Heart left ventricle (tissue), 16 donors: ENCODE measurements at regions of chr11 and their contacts with region 1.

Region 1: DNA sequence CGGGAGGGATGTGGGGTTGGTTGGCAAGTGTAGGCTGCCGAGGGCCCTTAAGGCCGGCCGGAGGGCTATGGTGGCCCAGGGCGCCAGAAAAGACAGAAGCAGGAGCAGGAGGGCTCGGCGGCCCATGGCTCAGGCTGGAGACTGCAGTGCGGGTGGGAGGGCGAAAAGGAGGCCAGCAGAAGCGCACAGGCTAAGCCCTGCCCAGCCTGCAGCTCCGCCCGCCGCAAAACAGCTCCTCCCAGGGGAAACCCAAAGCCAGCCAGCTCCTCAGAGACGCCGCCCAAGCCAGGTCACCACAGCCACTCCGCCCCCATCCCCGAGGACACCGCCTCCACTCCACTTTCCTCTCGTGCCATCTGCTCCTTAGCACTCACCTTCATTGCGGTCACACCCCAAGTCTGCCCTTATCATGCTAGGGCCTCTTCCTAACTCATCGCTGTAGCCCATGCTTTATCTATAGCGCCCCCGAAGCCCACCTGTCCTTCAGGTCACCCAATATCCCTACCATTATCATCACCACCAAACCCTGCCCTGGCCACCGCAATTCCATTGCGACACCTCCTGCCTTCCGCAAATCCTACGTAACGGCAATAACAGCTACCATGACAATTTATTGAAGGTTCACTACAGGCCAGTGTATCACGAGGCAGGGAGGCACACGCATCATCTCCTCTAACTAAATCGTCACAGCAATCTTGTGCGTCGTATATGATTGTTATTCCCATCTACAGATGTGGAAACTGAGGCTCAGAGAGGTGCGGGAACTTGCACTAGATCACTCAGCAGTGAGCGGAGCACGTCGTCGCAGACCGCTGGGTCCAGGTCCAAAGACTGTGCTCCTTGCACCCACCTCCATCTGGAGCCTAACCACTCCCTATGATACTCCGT is at the start of gene PRCP:
- DNase-seq: peak; percentile 94 to 97 (median 95)
- ATAC-seq: peak; percentile 94 to 96 (median 96)
- H3K4me3 ChIP-seq: peak within 1 kb of the TSS; percentile 55 to 93 (median 74)
- H3K27ac ChIP-seq: peak within 1 kb of the TSS; percentile 31 to 93 (median 86)
- H3K4me1 ChIP-seq: peaks cover 0 to 53% (median 23%) of the 10 kb centered on the region in 12 donors
- H3K27me3 ChIP-seq: no peaks in the 10 kb centered on the region
- CTCF ChIP-seq: peak in 1 of 12 donors; percentile 32
- POLR2A ChIP-seq: peak in 1 of 2 donors; percentile 92
- total RNA-seq, gene PRCP: 29.7 to 99.4 (median 44.0) TPM

Region 2: DNA sequence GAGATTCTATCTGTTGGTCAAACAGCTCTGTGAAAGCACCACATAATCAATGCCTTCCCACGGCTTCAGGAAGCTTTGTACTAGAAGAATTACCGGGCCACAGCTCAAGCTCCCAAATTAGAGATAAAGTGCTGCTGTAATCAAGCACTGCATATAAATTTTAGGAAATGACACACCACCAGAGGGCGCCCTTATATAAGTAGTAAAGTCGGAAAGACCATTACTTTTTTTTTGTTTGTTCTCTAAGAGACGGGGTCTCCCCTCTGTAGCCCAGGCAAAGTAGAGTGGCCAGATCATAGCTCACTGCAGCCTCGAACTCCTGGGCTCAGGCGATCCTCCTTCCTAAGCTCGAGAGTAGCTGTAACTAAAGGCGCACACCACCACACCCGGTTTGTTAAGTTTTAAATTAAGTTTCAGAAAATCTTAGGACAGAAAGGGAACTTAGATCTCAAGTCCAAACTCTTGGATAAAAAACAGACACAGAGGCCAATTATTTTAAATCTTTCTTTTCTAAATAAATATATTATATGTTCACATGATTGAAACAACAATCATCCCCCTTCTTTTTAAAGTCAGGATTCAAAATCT is 32.9 kb before region 1 on chr11:
- intact Hi-C with region 1: loop called in 6 of 10 experiments (anchors 1 to 5 kb)
- DNase-seq: peak in 4 of 5 donors; percentile 58 to 84 (median 74)
- ATAC-seq: peak in 3 of 4 donors; percentile 54 to 62 (median 55)
- H3K4me3 ChIP-seq: peak overlapping the region in 7 of 12 donors; percentile 7 to 38 (median 31)
- H3K27ac ChIP-seq: no peak overlapping the region
- H3K4me1 ChIP-seq: peaks cover 0 to 48% (median 21%) of the 10 kb centered on the region in 12 donors
- H3K27me3 ChIP-seq: no peaks in the 10 kb centered on the region
- CTCF ChIP-seq: peak; percentile 60 to 84 (median 76)
- POLR2A ChIP-seq: no peak

Region 3: DNA sequence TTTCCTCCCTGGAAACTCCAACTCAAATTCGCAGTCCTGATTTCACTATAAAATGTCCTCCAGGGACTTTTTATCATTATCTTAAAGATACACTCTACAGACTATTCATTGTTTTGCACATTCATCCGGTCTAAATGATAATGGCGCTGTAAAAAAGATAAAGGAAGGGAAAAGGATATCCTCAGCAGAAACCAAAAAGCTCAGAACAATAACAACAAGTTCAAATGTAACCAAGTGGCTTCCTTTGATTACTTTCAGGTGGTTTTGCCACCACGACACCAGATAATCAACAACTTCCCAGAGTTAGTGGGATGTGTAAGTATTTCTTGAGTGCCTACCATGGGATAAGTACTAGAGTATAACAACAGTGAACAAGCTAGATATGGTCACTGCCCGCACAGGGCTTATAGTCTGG is 26.6 kb before region 1 on chr11:
- intact Hi-C with region 1: loop called in 5 of 10 experiments (anchors 2 to 5 kb)
- DNase-seq: no peak
- ATAC-seq: peak in 3 of 4 donors; percentile 26 to 76 (median 58)
- H3K4me3 ChIP-seq: no peak overlapping the region
- H3K27ac ChIP-seq: peak overlapping the region in 2 of 12 donors; percentile 24 to 35
- H3K4me1 ChIP-seq: peaks cover 0 to 38% (median 22%) of the 10 kb centered on the region in 12 donors
- H3K27me3 ChIP-seq: no peaks in the 10 kb centered on the region
- CTCF ChIP-seq: no peak
- POLR2A ChIP-seq: no peak

Region 4: DNA sequence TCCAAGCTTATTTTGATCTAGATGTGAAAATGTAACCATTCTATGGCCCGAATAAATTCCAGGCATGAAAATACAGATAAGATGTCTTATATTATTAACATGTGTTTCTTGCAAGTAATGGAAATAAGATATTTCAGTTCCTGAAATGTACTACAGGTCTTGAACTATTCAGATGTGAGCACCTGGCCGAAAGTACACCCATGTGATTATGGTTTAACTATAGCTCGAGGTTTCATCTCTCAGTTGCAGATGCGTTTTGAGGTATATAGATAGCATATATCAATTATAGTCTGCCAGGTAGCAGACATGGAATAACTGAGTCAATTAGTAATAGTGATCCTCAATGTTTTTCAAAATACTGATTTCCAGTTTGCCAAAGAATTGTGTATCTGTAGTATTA is 69.3 kb after region 1 on chr11:
- intact Hi-C with region 1: no loop called
- DNase-seq: no peak
- ATAC-seq: no peak
- H3K4me3 ChIP-seq: no peak overlapping the region
- H3K27ac ChIP-seq: no peak overlapping the region
- H3K4me1 ChIP-seq: no peaks in the 10 kb centered on the region
- H3K27me3 ChIP-seq: no peaks in the 10 kb centered on the region
- CTCF ChIP-seq: no peak
- POLR2A ChIP-seq: no peak

Region 5: GRCh38 chr11:83193315-83194280 is 293.1 kb after region 1 on chr11 and contains the start of gene ANKRD42:
- intact Hi-C with region 1: loop called in 8 of 10 experiments (anchors 2 to 10 kb)
- DNase-seq: peak; percentile 93 to 96 (median 94)
- ATAC-seq: peak; percentile 95 to 98 (median 98)
- H3K4me3 ChIP-seq: peak within 1 kb of the TSS; percentile 49 to 97 (median 84)
- H3K27ac ChIP-seq: peak within 1 kb of the TSS; percentile 58 to 96 (median 89)
- H3K4me1 ChIP-seq: peaks cover 0 to 40% (median 24%) of the 10 kb centered on the region in 12 donors
- H3K27me3 ChIP-seq: no peaks in the 10 kb centered on the region
- CTCF ChIP-seq: no peak
- POLR2A ChIP-seq: peak in 1 of 2 donors; percentile 60
- total RNA-seq, gene ANKRD42: 3.7 to 9.1 (median 6.0) TPM

Region 6: DNA sequence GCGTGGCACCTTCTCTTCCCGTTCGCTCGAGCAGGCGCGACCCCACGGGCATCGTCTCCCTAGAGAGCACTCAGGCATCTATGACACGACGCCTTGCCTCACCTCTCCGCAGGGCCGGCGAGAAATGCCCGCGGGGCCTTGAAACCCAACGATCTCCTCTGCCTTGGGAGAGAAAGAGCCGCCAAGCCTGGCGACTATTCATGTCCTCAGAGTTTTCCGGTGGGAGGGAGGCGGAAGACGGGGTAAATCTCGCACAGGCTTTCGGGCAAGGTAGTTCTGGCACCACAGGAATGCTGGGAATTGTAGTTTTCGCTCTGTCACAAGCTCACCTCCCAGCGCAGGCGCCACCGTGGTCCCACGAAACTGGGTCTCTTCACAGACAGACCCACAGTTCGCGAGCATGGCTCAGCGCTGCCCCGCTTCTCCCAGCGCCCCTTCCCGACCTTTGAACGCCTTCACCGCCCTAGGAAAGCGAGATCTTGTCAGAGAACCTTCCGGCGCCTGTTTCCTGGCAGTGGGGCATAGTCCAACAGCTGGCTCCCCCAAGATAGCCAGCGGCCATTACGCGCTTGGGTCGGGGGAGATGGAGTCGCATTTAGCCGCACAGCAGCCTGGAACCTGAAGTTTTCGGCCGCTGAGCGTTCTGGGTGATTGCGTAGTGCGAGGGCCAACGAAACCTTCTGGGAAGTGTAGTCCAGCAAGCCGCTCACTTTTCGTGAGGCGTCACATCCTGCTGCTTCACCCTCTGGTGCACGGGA is 385.4 kb after region 1 on chr11 and contains the start of gene CCDC90B:
- intact Hi-C with region 1: loop called in 3 of 10 experiments (anchors 5 to 10 kb)
- DNase-seq: peak; percentile 95 to 98 (median 96)
- ATAC-seq: peak; percentile 98 to 99 (median 98)
- H3K4me3 ChIP-seq: peak within 1 kb of the TSS; percentile 29 to 99 (median 83)
- H3K27ac ChIP-seq: peak within 1 kb of the TSS; percentile 90 to 99 (median 98)
- H3K4me1 ChIP-seq: peaks cover 0 to 45% (median 26%) of the 10 kb centered on the region in 12 donors
- H3K27me3 ChIP-seq: no peaks in the 10 kb centered on the region
- CTCF ChIP-seq: peak in 3 of 12 donors; percentile 14 to 46 (median 29)
- POLR2A ChIP-seq: peak in 1 of 2 donors; percentile 84
- total RNA-seq, gene CCDC90B: 18.0 to 31.7 (median 26.7) TPM

Region 7: GRCh38 chr11:83628622-83629355 is 728.3 kb after region 1 on chr11:
- intact Hi-C with region 1: no loop called
- DNase-seq: no peak
- ATAC-seq: no peak
- H3K4me3 ChIP-seq: no peak overlapping the region
- H3K27ac ChIP-seq: no peak overlapping the region
- H3K4me1 ChIP-seq: no peaks in the 10 kb centered on the region
- H3K27me3 ChIP-seq: no peaks in the 10 kb centered on the region
- CTCF ChIP-seq: no peak
- POLR2A ChIP-seq: no peak